ENCODE measurements at regions of chr22 and their contacts with region 1.

Region 1: DNA sequence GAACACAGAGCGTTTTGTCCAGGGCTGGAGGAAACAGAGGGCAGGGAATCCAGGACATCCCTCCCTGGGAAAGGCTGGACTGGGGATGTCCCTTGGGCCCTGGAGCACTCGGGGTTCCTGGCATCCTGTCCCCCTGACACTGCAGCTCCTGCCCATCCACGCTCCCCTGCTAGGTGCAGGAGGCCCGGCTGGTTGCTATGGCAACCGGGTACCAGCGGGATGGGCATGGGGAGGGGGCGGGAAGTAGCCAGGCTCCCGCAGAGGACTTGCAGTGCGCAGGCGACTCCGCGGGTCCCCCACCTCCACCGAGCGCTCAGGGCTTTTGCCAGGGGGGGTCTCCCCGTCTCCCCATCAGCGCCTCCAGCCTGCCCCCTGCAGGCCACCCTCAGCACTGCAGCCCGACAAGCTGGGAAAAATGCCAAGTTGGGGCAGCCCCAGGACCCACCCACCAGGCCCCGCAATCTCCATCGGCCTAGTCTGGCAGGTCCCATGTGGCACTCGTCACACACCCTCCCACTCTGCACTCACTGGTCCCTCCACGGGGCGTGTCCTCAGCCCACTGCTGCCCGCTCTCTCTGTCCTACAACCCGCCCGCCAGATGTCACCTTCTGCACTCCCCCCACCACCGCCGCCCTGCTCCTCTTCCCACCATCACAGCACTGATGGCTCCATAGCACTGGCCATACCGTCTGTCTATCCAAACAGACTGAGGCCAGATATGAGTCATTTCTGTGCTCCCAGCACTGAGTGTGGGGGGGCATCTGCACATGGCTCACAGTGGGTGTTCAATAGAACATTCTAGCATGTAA is 31.5 kb downstream of the KIAA0930 start:
- DNase-seq: peak in 1 of 2 experiments; percentile 26
- ATAC-seq: peak in 1 of 2 experiments; percentile 3; a peak in 1 of 6 replicates
- H3K4me3 ChIP-seq: no peak overlapping the region
- H3K27ac ChIP-seq: peak overlapping the region; percentile 46 to 93; a peak in 5 of 6 replicates
- H3K4me1 ChIP-seq: peaks cover 37% of the 10 kb centered on the region
- CTCF ChIP-seq: peak; percentile 39
- EP300 ChIP-seq: no peak
- POLR2A ChIP-seq: no peak
- RAD21 ChIP-seq: no peak

Region 2: DNA sequence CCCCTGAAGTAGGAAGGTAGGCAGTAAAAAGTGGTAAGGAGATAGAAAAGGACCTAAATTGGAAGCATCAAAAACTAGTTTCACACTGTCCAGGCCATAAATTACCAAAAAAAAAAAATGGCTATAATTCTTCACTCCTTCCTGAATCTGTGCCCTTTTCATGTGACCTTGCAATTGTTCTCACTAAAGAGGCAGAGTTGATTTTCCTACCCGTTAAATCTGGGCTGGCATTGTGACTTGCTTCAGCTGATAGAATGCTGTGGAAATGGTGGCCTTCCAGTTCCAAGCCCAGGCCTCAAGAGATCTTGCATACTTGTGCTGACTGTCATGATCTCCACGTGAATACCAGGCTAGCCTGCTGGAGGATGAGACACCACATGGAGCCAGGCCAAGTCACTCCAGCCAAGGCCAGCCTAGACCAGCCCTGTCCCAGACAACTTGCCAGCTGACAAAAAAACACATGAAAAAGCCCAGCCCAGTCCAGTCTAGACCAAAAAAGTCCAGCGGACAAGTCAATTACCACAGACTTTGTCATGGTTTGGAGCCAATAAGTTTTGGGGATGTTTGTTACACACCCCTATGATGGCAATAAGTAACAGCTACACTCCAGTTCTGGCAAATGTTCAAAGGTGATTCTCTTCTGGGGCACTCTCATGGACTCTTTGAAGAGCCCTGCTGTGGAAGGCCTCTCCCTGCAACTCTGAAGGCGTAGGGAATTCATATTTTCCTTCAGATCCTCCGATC is 96.9 kb before region 1 on chr22:
- CTCF ChIA-PET with region 1: no interaction called
- POLR2A ChIA-PET with region 1: no interaction called
- DNase-seq: no peak
- ATAC-seq: no peak
- H3K4me3 ChIP-seq: no peak overlapping the region
- H3K27ac ChIP-seq: no peak overlapping the region
- H3K4me1 ChIP-seq: no peaks in the 10 kb centered on the region
- CTCF ChIP-seq: no peak
- EP300 ChIP-seq: no peak
- POLR2A ChIP-seq: no peak
- RAD21 ChIP-seq: no peak

Region 3: DNA sequence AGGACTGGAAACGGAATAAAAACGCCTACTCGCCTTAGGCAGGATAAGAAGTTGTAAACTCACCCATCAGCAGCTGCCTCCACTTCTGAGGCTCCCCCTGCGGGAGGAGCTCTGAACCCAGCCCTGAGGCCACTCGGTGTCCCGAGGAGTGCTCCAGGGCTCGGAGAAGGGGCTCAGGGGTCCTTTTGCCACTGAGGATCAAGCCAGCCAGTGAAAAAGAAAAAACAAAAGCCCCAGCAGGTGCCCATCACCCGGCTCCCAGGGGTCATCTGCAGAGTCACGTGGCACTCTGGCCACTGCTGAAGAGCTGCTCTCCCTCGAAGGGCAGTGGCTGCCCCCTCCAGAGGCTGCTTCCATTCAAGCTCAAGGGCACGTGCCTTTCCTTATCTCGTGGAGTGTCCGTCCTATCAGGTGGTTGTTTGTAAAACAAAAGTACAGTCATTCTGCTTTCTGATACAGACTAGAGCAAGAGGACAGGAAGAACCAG is 16.5 kb before region 1 on chr22:
- CTCF ChIA-PET with region 1: interaction called, 17 read pairs
- POLR2A ChIA-PET with region 1: no interaction called
- DNase-seq: no peak
- ATAC-seq: peak in 1 of 2 experiments; percentile 58; a peak in 3 of 6 replicates
- H3K4me3 ChIP-seq: no peak overlapping the region
- H3K27ac ChIP-seq: no peak overlapping the region
- H3K4me1 ChIP-seq: no peaks in the 10 kb centered on the region
- CTCF ChIP-seq: peak; percentile 15; the same call in 1 of the 3 replicates
- EP300 ChIP-seq: no peak
- POLR2A ChIP-seq: no peak
- RAD21 ChIP-seq: peak; percentile 21 to 34; a peak in 2 of 5 replicates

Region 4: GRCh38 chr22:45235101-45235777 is 26.0 kb after region 1 on chr22:
- CTCF ChIA-PET with region 1: no interaction called
- POLR2A ChIA-PET with region 1: no interaction called
- DNase-seq: no peak
- ATAC-seq: no peak
- H3K4me3 ChIP-seq: no peak overlapping the region
- H3K27ac ChIP-seq: no peak overlapping the region
- H3K4me1 ChIP-seq: peaks cover 9% of the 10 kb centered on the region; the same call in 2 of the 3 replicates
- CTCF ChIP-seq: no peak
- EP300 ChIP-seq: no peak
- POLR2A ChIP-seq: no peak
- RAD21 ChIP-seq: no peak

Region 5: DNA sequence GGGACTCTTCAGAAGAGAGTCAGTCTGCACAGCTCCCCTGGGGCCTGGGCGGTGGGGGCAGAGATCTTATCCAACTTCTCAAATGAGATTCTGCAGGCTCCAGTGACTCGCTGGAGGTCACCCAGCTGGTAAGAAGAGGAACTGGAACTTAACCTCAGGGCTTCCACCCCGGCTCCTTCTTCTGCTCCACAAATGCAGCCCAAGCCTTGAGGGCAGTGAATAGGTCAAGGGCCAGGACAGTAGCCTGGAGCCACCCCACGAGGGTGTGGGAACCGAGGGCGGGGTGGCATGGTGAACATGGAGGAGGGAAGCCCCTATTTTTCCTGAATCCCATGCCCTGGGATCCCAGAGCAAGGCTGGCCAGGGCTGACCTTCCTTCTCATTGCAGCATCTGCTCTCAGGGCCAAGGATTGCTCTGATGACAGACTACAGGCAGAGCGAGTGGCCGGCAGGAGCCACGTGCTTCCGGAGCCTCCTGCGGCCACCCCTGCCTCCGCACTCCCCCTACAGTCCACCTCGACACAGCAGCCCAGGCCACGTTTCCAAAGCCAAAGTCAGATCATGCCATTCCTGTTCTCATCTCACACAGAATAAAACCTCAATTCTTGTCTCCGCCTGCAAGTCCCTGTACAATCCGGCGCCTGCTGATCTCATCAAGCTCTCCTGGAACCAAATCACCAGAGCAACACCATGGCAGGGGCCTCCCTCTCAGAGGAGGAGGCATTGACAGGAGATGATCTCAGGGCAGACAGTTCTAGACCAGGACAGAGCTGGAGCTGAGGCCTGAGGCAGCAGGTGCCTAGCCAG is 54.5 kb after region 1 on chr22:
- CTCF ChIA-PET with region 1: interaction called, 10 read pairs
- POLR2A ChIA-PET with region 1: no interaction called
- DNase-seq: peak; percentile 80 to 81
- ATAC-seq: peak; percentile 90 to 96
- H3K4me3 ChIP-seq: no peak overlapping the region
- H3K27ac ChIP-seq: peak overlapping the region; percentile 60 to 87
- H3K4me1 ChIP-seq: peaks cover 12% of the 10 kb centered on the region
- CTCF ChIP-seq: peak; percentile 60
- EP300 ChIP-seq: no peak
- POLR2A ChIP-seq: no peak
- RAD21 ChIP-seq: peak; percentile 83 to 84

Measured in A549 (cell line).